ENCODE measurements at regions of chr6 and their contacts with region 1.

Region 1: DNA sequence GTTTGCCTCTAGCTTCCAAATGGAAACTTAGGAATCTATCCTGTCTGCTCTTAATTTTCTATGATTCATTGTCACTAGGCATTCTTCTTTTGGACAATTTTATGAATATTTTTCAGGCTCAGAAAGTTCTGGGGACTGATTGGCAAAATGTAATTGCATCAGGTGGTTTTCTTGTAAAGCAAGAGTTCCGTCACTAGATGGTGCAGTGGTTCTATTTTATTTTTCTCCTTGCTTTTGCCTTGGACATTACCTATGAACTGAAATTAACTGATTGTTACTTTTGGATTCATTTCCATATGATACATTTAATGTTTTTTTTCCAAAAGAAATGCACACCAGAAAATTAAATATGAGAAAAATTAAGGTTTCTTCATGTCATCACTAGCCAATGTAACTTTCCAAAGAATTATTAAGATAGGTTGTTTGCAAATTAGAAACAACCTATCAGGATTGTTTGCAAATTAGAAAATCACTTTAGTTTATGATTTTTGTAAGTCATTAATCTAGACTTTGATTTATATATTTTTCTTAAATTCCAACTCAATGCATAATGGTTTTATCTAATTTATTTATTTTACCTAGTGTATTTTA is 48.0 kb downstream of the TMEM170B start:
- DNase-seq: no peak
- H3K4me3 Mint-ChIP-seq: no peak overlapping the region
- H3K27ac Mint-ChIP-seq: no peak overlapping the region
- H3K4me1 Mint-ChIP-seq: no peaks in the 10 kb centered on the region
- H3K27me3 Mint-ChIP-seq: no peaks in the 10 kb centered on the region
- CTCF ChIP-seq: no peak

Region 2: GRCh38 chr6:11618533-11618932 is 33.0 kb after region 1 on chr6:
- CTCF ChIA-PET with region 1: no interaction called
- intact Hi-C with region 1: no loop called
- DNase-seq: no peak
- H3K4me3 Mint-ChIP-seq: no peak overlapping the region
- H3K27ac Mint-ChIP-seq: no peak overlapping the region
- H3K4me1 Mint-ChIP-seq: no peaks in the 10 kb centered on the region
- H3K27me3 Mint-ChIP-seq: no peaks in the 10 kb centered on the region
- CTCF ChIP-seq: no peak

Region 3: DNA sequence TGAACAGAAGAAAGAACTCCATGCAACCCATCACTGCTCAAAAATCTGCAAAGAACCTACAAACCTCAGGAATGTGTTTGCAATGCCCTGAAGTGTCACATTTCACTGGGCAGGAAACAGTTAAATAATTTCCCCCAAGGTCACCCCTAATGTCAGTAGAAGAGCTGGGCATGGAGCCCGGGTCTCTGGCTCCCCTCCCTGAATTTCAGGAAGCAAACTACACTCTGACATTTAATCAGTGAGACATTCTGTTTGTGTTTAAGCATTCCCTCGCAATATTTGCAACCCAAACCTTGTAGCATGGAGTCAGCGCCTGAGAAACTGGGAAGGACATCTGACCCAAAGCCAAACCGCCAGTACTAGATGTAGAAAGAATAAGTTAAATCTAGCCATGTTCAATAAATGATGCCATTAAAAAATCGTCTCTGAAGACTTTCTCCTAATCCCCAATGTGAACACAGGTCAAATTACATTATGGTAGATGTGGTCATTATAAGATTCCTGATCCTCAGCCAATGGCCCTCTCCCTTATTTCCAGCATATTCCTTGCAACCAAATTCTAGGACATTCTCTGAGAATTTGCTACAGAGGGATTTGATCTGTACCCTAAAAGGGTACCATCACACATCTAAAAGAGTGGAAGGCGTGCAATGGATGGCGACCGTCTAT is 284.3 kb after region 1 on chr6:
- CTCF ChIA-PET with region 1: no interaction called
- intact Hi-C with region 1: no loop called
- DNase-seq: no peak
- H3K4me3 Mint-ChIP-seq: no peak overlapping the region
- H3K27ac Mint-ChIP-seq: no peak overlapping the region
- H3K4me1 Mint-ChIP-seq: no peaks in the 10 kb centered on the region
- H3K27me3 Mint-ChIP-seq: no peaks in the 10 kb centered on the region
- CTCF ChIP-seq: no peak

Region 4: GRCh38 chr6:12233693-12234571 is 648.4 kb after region 1 on chr6:
- CTCF ChIA-PET with region 1: no interaction called
- intact Hi-C with region 1: loop called (anchors 5 kb)
- DNase-seq: peak; percentile 29
- H3K4me3 Mint-ChIP-seq: no peak overlapping the region
- H3K27ac Mint-ChIP-seq: no peak overlapping the region
- H3K4me1 Mint-ChIP-seq: peaks cover 8% of the 10 kb centered on the region
- H3K27me3 Mint-ChIP-seq: no peaks in the 10 kb centered on the region
- CTCF ChIP-seq: peak; percentile 64